Activated naive CD8-positive, alpha-beta T cell treated with anti-CD3 and anti-CD28 coated beads, Interleukin-2, amount 10 ng/mL, durations not matched to agents 7 days and 5 days (primary cell): ENCODE measurements at regions of chr12 and their contacts with region 1.

Region 1: GRCh38 chr12:9813821-9814809 is 13.2 kb upstream of the KLRF1 start:
- DNase-seq: peak; percentile 97
- ATAC-seq: peak; percentile 98
- H3K4me3 Mint-ChIP-seq: peak overlapping the region; percentile 87
- H3K27ac Mint-ChIP-seq: peak overlapping the region; percentile 92
- H3K4me1 Mint-ChIP-seq: peaks cover 24% of the 10 kb centered on the region
- H3K27me3 Mint-ChIP-seq: peaks cover 7% of the 10 kb centered on the region

Region 2: GRCh38 chr12:9731797-9732196 is 82.3 kb before region 1 on chr12:
- POLR2A ChIA-PET with region 1: no interaction called
- DNase-seq: no peak
- ATAC-seq: peak; percentile 72
- H3K4me3 Mint-ChIP-seq: peak overlapping the region; percentile 58
- H3K27ac Mint-ChIP-seq: peak overlapping the region; percentile 35
- H3K4me1 Mint-ChIP-seq: peaks cover 29% of the 10 kb centered on the region
- H3K27me3 Mint-ChIP-seq: no peaks in the 10 kb centered on the region

Region 3: GRCh38 chr12:9773216-9773877 is 40.8 kb before region 1 on chr12:
- POLR2A ChIA-PET with region 1: no interaction called
- DNase-seq: no peak
- ATAC-seq: peak; percentile 80
- H3K4me3 Mint-ChIP-seq: peak overlapping the region; percentile 68
- H3K27ac Mint-ChIP-seq: peak overlapping the region; percentile 60
- H3K4me1 Mint-ChIP-seq: peaks cover 69% of the 10 kb centered on the region
- H3K27me3 Mint-ChIP-seq: no peaks in the 10 kb centered on the region

Region 4: DNA sequence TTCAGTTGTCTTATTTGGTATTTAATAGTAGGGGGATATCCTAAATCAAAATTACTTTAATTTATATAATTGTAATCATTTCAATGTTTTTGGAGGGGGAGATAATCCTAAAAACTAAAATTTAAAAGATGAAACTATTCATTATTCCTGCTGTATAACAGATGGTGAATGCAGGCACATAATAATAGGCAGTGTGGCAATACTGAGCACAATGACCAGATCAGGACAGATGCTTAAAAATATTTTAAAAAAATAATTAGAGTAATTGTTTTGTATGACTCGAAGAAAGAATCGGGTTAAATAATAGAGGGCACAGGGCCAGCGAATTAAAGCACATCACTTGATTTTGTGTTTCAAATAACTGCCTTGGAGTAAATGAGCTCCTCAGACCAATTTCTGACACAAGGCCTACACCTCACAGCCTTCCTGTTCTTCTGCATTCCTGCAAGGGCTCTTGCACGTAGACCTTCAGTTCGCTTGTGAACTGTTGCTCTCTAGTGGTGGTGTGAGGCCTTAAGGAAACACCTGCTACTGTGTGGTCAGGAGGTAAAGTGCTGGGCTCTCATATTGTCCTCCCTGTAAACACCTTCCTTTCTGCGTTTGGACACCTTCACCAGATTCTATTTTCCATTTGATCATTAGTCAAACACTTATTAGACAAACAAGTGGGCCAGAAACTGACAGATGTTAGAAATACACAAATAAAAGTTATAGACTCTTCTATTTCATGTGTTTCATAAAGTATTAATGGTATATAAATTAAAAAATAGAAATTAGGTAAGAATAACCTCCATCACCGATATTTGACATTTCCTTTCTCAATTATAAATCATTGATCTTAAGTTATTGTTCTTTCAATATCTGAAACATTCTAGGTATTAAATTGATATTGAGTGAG is 16.1 kb before region 1 on chr12:
- POLR2A ChIA-PET with region 1: interaction called, 11 read pairs
- DNase-seq: no peak
- ATAC-seq: peak; percentile 84
- H3K4me3 Mint-ChIP-seq: peak overlapping the region; percentile 35
- H3K27ac Mint-ChIP-seq: peak overlapping the region; percentile 68
- H3K4me1 Mint-ChIP-seq: peaks cover 39% of the 10 kb centered on the region
- H3K27me3 Mint-ChIP-seq: peaks cover 4% of the 10 kb centered on the region

Region 5: GRCh38 chr12:9906873-9907272 is 92.8 kb after region 1 on chr12:
- POLR2A ChIA-PET with region 1: interaction called, 13 read pairs
- DNase-seq: no peak
- ATAC-seq: peak; percentile 98
- H3K4me3 Mint-ChIP-seq: peak overlapping the region; percentile 79
- H3K27ac Mint-ChIP-seq: peak overlapping the region; percentile 89
- H3K4me1 Mint-ChIP-seq: peaks cover 30% of the 10 kb centered on the region
- H3K27me3 Mint-ChIP-seq: no peaks in the 10 kb centered on the region